Sigmoid colon (tissue), 7 donors: ENCODE measurements at regions of chr2 and their contacts with region 1.

Region 1: DNA sequence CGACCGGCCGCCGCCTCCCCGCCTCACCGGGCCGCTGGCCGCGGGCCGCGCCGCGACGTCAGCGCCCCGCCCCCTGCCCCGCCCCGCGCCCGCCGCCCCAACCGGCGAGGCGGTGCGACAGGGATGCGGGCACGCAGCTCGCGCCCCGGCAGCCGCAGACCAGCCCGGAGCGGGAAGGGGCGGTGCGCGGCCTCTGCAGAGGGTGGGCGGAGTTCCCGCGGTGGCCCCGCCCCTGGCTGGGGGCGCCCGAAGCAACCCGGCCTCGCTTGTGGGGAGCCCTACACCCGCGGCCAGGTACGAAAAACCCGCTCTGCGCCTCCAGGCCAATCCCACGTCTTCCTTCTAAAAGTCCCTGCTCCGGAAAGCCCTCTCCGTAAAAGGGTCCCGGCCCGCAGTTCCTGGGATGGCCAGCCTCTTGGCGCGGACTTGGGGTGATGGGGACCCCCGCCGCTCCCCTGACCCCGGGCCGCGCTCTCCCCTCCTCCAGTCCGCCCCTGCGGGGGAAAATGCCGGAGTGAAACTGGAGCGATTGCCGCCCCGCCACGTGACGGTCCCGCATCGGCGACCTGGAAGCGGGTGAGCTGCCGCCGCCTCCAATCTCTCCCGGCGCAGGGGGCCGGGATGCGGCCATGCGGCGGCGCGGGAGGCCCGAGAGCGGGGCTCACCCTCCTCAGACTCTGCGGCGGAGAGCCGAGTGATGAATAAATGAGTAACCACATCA is at the start of gene RAB11FIP5:
- DNase-seq: peak; percentile 90
- H3K4me3 ChIP-seq: peak within 1 kb of the TSS; percentile 60 to 92 (median 84)
- H3K27ac ChIP-seq: peak within 1 kb of the TSS; percentile 88 to 97 (median 92)
- H3K4me1 ChIP-seq: peaks cover 0 to 44% (median 33%) of the 10 kb centered on the region in 4 donors
- H3K27me3 ChIP-seq: no peaks in the 10 kb centered on the region
- CTCF ChIP-seq: peak in 1 of 4 experiments; percentile 16
- EP300 ChIP-seq: no peak
- POLR2A ChIP-seq: no peak
- total RNA-seq, gene RAB11FIP5: 13.9 to 24.4 (median 19.4) TPM

Region 2: DNA sequence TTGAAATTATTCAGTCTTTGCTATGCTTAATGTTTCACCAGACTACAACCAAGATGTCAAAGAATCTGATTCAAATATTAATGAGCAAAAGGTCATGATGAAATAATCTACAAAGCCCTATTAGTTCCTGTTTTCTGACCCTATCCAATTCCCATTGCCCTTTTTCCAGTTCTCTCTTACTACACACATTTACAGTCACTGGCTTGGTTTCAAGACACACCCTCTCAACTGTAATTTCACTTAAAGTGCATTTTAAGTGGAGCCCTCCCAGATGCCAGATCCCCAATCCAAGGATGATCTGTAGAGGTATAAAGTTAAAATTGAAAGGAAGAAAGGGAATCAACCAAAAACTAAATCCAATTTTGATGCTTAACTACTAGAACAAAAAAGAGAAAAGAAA is 718.4 kb before region 1 on chr2:
- intact Hi-C with region 1: no loop called
- DNase-seq: no peak
- H3K4me3 ChIP-seq: no peak overlapping the region
- H3K27ac ChIP-seq: no peak overlapping the region
- H3K4me1 ChIP-seq: peaks cover 0 to 8% (median 0%) of the 10 kb centered on the region in 4 donors
- H3K27me3 ChIP-seq: no peaks in the 10 kb centered on the region
- CTCF ChIP-seq: no peak
- EP300 ChIP-seq: no peak
- POLR2A ChIP-seq: no peak

Region 3: DNA sequence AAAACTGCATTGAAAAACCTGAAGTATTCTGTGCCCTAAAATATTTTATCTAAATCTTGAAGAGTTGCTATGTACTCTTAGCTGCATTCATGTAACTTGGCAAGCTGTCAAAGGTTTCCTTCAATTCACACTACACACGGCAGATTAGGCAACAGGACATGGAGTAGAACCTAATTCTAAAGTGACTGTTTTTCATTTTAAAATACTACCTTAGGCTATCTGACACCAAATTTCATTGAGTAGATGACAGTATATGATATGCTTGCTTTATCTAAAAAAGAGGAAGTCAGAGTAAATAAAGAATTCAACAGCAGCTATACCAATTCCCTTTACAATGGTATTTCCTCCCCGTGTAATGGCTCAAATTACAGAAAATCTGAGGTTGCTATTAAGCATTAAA is 332.6 kb before region 1 on chr2:
- intact Hi-C with region 1: no loop called
- DNase-seq: no peak
- H3K4me3 ChIP-seq: no peak overlapping the region
- H3K27ac ChIP-seq: no peak overlapping the region
- H3K4me1 ChIP-seq: peaks cover 0 to 7% (median 0%) of the 10 kb centered on the region in 4 donors
- H3K27me3 ChIP-seq: no peaks in the 10 kb centered on the region
- CTCF ChIP-seq: no peak
- EP300 ChIP-seq: no peak
- POLR2A ChIP-seq: no peak

Region 4: DNA sequence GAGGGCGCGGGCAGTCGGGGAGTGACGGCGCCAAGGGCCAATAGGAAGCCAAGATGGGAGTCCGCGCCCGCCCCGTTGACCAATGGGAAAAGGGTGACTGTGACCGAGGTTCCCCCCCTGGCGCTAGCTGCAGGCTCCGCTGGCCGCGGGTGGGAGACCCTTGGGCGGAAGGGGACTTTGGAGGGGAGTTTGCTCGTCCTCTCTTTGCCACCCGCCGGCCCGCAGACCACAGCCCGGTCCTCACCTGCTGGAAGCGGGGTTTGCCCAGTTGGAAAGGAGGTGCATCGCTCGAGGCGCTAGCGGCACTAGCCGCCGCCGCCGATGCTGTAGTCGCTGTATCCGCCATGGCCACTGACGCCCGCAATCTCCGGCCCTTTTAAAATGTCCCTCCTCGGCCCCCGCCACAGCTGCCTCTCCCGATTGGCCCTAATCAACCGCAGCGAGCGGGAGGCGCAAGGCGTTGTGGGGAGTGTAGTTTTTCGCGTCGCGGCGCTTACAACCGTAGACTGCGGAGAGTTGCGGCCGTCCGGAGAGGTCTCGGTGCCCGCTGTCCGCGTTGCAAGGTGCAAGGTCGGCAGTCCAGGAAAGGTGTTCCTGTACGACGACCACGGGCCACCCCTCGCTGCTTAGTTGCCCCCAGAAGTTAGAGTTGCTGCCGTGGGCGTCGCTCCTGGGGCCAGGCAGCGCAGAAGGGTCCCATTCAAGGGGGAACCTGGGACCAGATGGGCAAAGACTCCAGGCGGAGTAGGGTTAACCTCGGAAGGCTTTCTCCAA is 41.5 kb before region 1 on chr2 and contains the start of gene SFXN5:
- intact Hi-C with region 1: loop called (anchors 1 kb)
- DNase-seq: peak; percentile 99
- H3K4me3 ChIP-seq: peak within 1 kb of the TSS; percentile 67 to 90 (median 78)
- H3K27ac ChIP-seq: peak within 1 kb of the TSS; percentile 87 to 96 (median 93)
- H3K4me1 ChIP-seq: peaks cover 0 to 37% (median 29%) of the 10 kb centered on the region in 4 donors
- H3K27me3 ChIP-seq: no peaks in the 10 kb centered on the region
- CTCF ChIP-seq: peak in 1 of 4 experiments; percentile 26
- EP300 ChIP-seq: no peak
- POLR2A ChIP-seq: peak in 1 of 2 donors; percentile 4
- total RNA-seq, gene SFXN5: 6.7 to 27.1 (median 10.4) TPM

Region 5: GRCh38 chr2:75025623-75026380 is 1912.7 kb after region 1 on chr2:
- intact Hi-C with region 1: no loop called
- DNase-seq: no peak
- H3K4me3 ChIP-seq: no peak overlapping the region
- H3K27ac ChIP-seq: no peak overlapping the region
- H3K4me1 ChIP-seq: no peaks in the 10 kb centered on the region
- H3K27me3 ChIP-seq: no peaks in the 10 kb centered on the region
- CTCF ChIP-seq: no peak
- EP300 ChIP-seq: no peak
- POLR2A ChIP-seq: no peak